Posterior vena cava (tissue), 2 donors: ENCODE measurements at regions of chr4 and their contacts with region 1.

Region 1: DNA sequence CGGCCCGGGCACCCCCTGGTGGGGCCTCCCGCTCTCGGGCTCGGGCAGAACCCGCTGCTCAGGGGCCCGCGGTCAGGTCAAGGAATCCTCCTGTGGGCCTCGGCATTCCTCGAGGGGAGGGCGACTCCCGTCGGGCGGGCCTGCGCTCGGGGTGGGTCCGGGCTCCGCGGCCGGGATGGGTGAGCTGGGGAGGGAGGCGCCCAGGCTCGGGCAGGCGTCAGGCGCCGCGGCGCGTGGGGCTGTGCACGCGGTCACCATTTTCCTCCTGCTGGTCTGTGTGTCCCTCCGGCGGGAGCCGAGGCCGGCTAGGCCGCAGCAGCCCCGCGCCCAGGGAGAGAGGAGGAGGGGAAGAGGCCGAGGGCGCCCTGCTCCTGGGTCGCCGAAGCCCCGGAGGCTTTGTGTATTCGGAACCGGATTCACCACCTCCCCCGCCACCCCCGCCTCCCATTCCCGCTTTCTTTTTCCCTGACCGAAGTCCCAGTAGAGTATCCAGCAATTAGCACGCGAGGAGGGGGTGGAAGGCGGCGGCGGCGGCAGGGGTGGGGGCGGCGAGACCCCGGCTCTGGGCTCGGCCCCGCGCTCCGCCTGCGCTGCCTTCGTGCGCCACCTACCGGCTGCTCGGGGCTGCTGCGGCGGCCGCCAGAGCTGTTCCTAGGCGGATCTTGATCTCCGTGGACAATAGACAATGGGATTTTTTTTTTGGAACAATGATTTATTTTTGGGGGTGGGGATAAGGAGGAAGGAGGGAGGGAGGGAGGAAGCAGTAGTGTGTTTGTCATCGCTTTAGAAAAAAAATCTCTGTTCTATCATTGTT is 99.0 kb upstream of the MAML3 start:
- DNase-seq: peak; percentile 91

Region 2: DNA sequence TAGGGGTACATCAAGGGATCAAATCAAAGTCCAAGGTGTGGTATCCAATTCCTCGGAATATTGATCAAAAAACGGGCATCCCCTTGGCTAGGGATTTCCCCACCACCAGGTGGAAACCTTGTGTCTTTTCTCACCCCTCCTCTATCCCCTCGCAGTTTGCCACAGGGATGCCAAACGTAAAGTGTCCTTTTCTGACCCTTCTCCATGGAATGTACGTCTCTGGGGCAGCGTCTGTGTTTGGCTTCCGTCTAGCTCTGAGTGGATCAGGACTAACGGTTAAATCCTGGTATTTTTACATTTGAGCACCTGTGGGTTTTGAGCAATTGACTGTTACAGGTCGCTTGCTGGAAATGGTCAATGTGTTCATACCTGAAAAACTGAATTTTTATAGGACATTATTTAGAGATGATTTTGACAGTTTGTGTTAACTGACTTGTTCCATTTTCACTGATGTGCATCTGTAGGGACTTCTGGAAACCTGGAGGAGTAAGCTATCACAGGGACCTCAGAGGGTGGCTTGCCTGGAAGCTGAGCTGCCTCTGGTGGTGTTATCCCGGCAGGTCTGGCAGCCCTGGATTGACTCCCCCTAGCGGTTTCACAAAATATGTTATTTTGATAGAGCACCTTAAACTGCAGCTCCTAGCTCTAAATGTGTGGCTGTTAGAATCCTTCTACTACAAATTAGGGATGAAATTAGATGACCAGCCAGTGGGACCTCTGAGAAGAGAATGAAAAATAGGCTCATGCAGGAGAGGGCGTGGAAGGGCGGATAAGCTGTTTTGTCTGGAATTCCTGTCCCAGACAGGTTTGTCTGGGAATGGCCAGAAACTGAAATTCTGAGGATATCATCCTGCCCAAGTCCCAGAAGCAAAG is 596.1 kb before region 1 on chr4:
- intact Hi-C with region 1: loop called in 1 of 2 experiments (anchors 5 kb)
- DNase-seq: no peak

Region 3: GRCh38 chr4:139890816-139891215 is 362.1 kb before region 1 on chr4:
- intact Hi-C with region 1: loop called in 1 of 2 experiments (anchors 10 kb)
- DNase-seq: no peak

Region 4: DNA sequence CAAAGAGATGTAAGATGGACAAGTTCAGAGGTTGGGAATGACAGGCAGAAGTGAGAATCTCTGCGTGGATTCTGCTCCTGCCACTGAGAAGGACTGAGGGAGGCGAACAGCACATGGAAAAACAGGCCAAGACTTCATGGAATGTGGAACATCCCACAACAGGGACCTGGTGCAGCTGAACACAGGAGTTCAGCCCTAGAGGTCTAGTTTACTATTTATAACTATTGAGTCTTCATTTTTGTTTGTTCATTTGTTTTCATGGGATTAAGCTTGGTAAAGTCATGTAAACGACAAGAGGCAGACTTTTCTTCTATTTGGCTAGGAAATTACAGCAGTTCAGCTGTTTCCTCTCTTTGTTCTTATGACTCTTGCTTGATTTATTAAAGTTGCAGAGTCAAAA is 333.4 kb before region 1 on chr4:
- intact Hi-C with region 1: no loop called
- DNase-seq: no peak